Mucosa of descending colon (tissue), 3 donors: ENCODE measurements at regions of chr1 and their contacts with region 1.

Region 1: GRCh38 chr1:75203415-75204277 is 69.5 kb downstream of the LHX8 start:
- DNase-seq: peak in 1 of 3 donors; percentile 18
- ATAC-seq: peak; percentile 52
- H3K4me3 ChIP-seq: no peak overlapping the region
- H3K4me1 ChIP-seq: no peaks in the 10 kb centered on the region
- CTCF ChIP-seq: no peak

Region 2: GRCh38 chr1:74771913-74772515 is 431.6 kb before region 1 on chr1:
- intact Hi-C with region 1: loop called (anchors 10 kb)
- DNase-seq: peak in 1 of 3 donors; percentile 44
- ATAC-seq: peak; percentile 42
- H3K4me3 ChIP-seq: no peak overlapping the region
- H3K4me1 ChIP-seq: no peaks in the 10 kb centered on the region
- CTCF ChIP-seq: peak; percentile 40